Gastrocnemius medialis (tissue), 4 donors: ENCODE measurements at regions of chr5 and their contacts with region 1.

Region 1: DNA sequence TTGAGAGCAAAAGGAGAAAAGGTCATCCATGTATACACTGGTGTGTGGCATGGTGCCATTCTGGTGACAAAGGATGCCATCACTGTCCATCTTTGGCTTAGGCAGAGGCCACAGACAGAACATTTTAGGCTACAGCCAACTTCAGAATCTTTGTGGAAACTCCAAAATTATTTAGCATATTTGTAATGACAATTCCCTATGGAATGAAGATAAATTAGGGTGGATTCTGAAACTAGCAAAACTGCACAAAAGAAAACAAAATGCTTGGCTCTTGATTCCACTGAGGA is 92.5 kb downstream of the FBXW11 start:
- DNase-seq: no peak
- ATAC-seq: no peak
- H3K4me3 ChIP-seq: no peak overlapping the region
- H3K27ac ChIP-seq: no peak overlapping the region
- H3K4me1 ChIP-seq: peaks cover 15 to 16% of the 10 kb centered on the region in 2 donors
- H3K27me3 ChIP-seq: no peaks in the 10 kb centered on the region
- CTCF ChIP-seq: no peak
- POLR2A ChIP-seq: no peak

Region 2: DNA sequence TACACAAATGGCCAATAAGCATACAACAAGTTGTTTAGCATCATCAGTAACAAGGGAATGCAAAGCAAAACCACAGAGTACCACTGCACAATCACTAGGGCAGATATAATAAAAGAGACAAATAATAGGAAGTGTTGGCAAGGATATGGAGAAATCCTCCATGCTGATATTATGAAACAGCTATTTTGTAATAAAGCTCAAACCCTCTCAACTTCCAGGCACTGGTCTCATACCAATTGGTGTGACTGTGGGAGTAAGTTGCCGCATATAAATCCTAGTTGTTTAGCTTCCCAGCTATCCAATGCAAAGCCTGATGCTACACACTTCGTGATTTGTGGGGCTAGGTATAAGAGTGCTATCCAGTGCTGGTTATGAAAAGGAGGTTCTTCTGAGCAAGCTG is 39.7 kb before region 1 on chr5:
- in situ Hi-C with region 1: no loop called
- intact Hi-C with region 1: no loop called
- DNase-seq: no peak
- ATAC-seq: no peak
- H3K4me3 ChIP-seq: no peak overlapping the region
- H3K27ac ChIP-seq: no peak overlapping the region
- H3K4me1 ChIP-seq: no peaks in the 10 kb centered on the region
- H3K27me3 ChIP-seq: no peaks in the 10 kb centered on the region
- CTCF ChIP-seq: no peak
- POLR2A ChIP-seq: no peak

Region 3: DNA sequence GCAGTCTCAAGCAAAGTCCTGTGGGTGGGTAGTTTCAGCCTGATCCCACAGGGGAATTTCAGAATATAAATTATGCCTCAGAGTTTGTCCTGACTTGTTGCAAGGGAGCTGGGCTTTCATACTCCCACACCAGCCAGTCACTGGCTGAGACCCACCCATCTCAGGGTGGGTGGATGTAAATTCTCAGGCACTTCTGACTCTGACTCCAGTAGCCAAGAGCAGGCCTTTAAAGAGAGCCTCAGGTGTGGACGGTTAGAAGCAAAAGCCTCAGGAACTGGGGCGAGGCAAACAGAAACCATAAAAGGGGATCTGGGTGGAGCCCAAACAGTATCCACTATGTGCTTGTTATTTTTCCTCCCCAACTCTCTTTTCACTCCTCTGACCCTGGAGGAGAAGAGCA is 121.1 kb after region 1 on chr5:
- in situ Hi-C with region 1: loop called in 3 of 4 experiments (anchors 5 to 10 kb)
- intact Hi-C with region 1: loop called (anchors 1 kb)
- DNase-seq: no peak
- ATAC-seq: no peak
- H3K4me3 ChIP-seq: no peak overlapping the region
- H3K27ac ChIP-seq: no peak overlapping the region
- H3K4me1 ChIP-seq: peaks cover 0 to 3% of the 10 kb centered on the region in 2 donors
- H3K27me3 ChIP-seq: no peaks in the 10 kb centered on the region
- CTCF ChIP-seq: no peak
- POLR2A ChIP-seq: no peak

Region 4: DNA sequence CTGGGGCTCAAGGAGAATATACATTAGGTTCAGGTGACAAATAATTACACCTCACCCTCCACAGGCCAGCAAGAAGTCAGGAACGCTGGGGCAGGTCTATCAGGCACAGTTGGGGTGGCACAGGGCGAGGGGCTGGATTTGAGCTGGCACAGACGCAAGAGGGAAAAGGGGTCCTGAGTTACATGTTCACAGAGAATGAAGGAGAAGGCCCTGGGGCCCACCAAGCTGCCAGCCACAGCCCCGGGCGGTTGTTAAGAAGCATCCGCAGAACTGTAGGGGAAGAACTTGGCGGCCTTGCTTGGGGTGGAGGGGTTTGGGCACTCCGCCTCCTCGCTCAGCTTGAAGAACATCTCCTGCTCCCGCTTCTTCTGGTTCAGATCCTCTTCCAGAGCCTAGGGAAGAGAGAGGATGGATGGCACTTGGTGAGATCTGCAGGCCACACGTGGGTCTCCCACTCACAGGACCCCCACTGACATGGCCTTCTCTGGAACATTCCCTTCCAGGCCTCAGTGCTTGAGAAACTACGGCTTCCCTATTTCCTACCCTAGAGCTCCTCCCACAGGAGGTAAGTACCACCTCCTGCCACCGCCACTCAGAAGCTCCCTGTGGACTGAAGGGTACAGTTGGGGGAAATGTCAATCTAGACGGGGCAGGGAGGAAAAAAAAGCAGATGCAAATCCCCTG is 130.8 kb after region 1 on chr5:
- in situ Hi-C with region 1: loop called (anchors 5 to 10 kb)
- intact Hi-C with region 1: loop called (anchors 1 kb)
- DNase-seq: no peak
- ATAC-seq: no peak
- H3K4me3 ChIP-seq: no peak overlapping the region
- H3K27ac ChIP-seq: peak overlapping the region in 1 of 4 donors; percentile 22
- H3K4me1 ChIP-seq: peaks cover 0 to 3% of the 10 kb centered on the region in 2 donors
- H3K27me3 ChIP-seq: no peaks in the 10 kb centered on the region
- CTCF ChIP-seq: no peak
- POLR2A ChIP-seq: no peak